IMR-90 (cell line): ENCODE measurements at regions of chr1 and their contacts with region 1.

Region 1: DNA sequence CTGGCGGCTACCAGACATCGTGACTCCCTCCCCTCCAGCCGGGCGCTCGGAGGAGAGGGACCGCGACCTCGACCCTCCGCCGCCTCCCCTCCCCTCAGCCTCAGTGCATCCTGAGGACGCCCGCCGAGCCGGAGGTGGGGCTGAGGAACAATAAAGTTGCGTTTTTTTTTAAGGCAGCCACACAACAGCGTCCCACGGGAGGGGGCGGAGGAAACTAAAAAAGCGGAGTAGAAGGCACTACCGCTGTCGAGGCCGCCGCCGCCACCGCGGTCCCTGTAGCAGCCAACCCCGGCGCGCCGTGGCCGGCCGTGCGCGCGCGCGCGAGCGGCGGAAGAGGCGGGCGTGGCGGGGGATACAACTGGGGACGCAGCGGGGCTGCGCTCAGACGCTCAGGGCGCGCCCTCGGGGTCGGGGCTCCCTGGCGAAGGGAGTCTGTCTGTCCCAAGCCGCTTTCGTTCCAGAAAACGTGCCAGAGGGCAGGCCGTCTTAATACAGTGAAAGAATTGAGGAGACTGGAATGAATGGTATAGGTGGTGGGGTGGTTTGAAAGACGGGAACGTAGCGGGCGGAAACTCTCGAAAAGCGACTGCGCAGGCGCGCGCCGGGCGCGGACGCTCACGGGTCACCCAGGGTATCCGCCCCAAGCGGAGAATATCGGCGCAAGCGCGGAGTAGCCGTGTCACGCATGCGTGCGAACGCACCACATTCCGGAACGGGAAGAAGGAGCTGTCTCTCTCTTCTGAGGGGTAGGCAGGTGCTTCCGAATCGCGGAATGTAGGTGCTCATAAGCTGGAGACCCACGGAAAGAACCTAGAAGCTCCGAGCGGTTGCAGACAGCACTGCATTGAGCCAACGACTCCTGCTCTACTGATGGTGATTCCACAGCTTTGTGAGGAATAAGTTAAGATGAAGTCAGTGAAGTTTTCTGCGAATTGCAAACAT is at the start of gene COP1:
- DNase-seq: peak; percentile 93
- ATAC-seq: peak; percentile 92
- H3K4me3 ChIP-seq: peak within 1 kb of the TSS; percentile 76
- H3K27ac ChIP-seq: peak within 1 kb of the TSS; percentile 91
- H3K4me1 ChIP-seq: peaks cover 3% of the 10 kb centered on the region; the same call in 1 of the 2 replicates
- H3K27me3 ChIP-seq: no peaks in the 10 kb centered on the region
- CTCF ChIP-seq: no peak
- POLR2A ChIP-seq: peak; percentile 91
- RAD21 ChIP-seq: no peak
- total RNA-seq, gene COP1: 35.0 and 44.4 TPM in 2 replicates

Region 2: DNA sequence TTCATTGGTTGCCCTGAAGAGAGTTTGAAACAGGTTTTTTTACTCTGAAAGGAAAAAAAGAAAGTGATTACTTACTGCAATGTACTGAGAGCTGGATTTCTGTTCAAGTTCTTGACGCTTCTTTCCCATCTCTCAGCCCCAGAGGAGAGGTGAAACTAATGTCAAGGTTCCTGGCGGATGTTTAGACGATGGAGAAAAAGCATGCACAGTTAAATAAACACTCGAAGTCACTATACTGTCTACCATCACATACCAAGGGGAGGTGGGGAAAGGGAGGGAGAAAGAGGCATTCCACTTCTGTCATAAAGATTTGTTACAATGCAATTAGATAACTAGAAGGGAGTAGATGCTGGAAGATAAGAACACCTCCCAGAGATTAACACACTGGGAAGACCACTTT is 286.9 kb before region 1 on chr1:
- CTCF ChIA-PET with region 1: no interaction called
- POLR2A ChIA-PET with region 1: interaction called, 3 read pairs
- dilution Hi-C with region 1: no loop called
- in situ Hi-C with region 1: no loop called
- intact Hi-C with region 1: loop called (anchors 2 kb)
- DNase-seq: peak; percentile 77
- ATAC-seq: peak; percentile 75
- H3K4me3 ChIP-seq: no peak overlapping the region
- H3K27ac ChIP-seq: peak overlapping the region; percentile 43; the same call in 1 of the 2 replicates
- H3K4me1 ChIP-seq: peaks cover 14% of the 10 kb centered on the region
- H3K27me3 ChIP-seq: no peaks in the 10 kb centered on the region
- CTCF ChIP-seq: no peak
- POLR2A ChIP-seq: no peak
- RAD21 ChIP-seq: no peak

Region 3: DNA sequence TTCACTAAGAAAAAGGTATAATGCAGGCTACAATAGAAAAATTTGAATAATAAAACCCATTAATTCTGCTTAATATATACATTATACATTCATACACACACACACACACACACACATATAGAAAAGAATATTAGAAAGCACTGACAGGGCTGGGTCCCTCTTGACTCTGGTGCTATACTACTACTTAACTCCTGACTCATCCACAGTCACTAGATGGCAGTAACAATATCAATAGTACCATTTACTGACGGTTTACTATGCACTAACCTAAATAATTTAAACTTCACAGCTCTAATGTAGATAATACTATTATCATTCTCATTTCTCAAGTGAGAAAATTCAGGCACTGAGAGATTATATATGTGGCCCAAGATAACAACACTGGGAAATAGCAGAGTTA is 87.7 kb before region 1 on chr1:
- CTCF ChIA-PET with region 1: interaction called, 4 read pairs
- POLR2A ChIA-PET with region 1: no interaction called
- dilution Hi-C with region 1: no loop called
- in situ Hi-C with region 1: no loop called
- intact Hi-C with region 1: loop called (anchors 5 kb)
- DNase-seq: peak; percentile 30
- ATAC-seq: peak; percentile 59
- H3K4me3 ChIP-seq: no peak overlapping the region
- H3K27ac ChIP-seq: peak overlapping the region; percentile 40; the same call in 1 of the 2 replicates
- H3K4me1 ChIP-seq: peaks cover 3% of the 10 kb centered on the region
- H3K27me3 ChIP-seq: no peaks in the 10 kb centered on the region
- CTCF ChIP-seq: peak; percentile 16; the same call in 1 of the 2 replicates
- POLR2A ChIP-seq: no peak
- RAD21 ChIP-seq: no peak

Region 4: DNA sequence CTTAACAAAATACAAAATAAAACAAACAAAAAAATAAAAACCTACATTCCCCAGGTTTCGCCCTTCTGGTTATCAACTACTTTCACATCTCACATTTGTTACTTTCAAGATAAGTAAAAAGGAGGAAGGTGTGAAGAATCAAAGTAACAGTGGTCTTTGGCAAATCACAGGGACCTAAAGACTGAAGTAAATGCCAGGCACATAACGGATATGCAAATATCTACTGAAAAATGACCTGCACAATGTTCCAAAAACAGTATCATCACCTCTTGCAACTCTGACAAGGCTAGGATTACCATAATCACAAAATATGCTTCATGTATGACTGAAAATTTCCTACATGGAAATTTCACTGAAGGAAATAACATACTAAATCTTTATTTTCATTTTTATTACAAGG is 29.5 kb before region 1 on chr1:
- CTCF ChIA-PET with region 1: no interaction called
- POLR2A ChIA-PET with region 1: interaction called, 18 read pairs
- dilution Hi-C with region 1: no loop called
- in situ Hi-C with region 1: no loop called
- intact Hi-C with region 1: no loop called
- DNase-seq: no peak
- ATAC-seq: no peak
- H3K4me3 ChIP-seq: no peak overlapping the region
- H3K27ac ChIP-seq: no peak overlapping the region
- H3K4me1 ChIP-seq: no peaks in the 10 kb centered on the region
- H3K27me3 ChIP-seq: no peaks in the 10 kb centered on the region
- CTCF ChIP-seq: no peak
- POLR2A ChIP-seq: no peak
- RAD21 ChIP-seq: no peak